ENCODE measurements at regions of chr1 and their contacts with region 1.

Region 1: GRCh38 chr1:117121776-117122697 is 488 bp upstream of the TRIM45 start:
- DNase-seq: peak; percentile 97
- H3K4me3 ChIP-seq: peak overlapping the region; percentile 45 to 85 (median 68)
- H3K27ac ChIP-seq: peak overlapping the region; percentile 77 to 91 (median 86)
- H3K4me1 ChIP-seq: peaks cover 6 to 16% (median 13%) of the 10 kb centered on the region in 4 donors
- H3K27me3 ChIP-seq: peaks cover 6% of the 10 kb centered on the region
- CTCF ChIP-seq: peak; percentile 61 to 73 (median 70)
- EP300 ChIP-seq: no peak
- POLR2A ChIP-seq: no peak

Region 2: GRCh38 chr1:116990612-116991151 is 131.4 kb before region 1 on chr1:
- in situ Hi-C with region 1: no loop called
- intact Hi-C with region 1: no loop called
- DNase-seq: peak; percentile 24
- H3K4me3 ChIP-seq: no peak overlapping the region
- H3K27ac ChIP-seq: peak overlapping the region; percentile 5 to 44 (median 12)
- H3K4me1 ChIP-seq: peaks cover 0 to 40% (median 22%) of the 10 kb centered on the region in 4 donors
- H3K27me3 ChIP-seq: no peaks in the 10 kb centered on the region
- CTCF ChIP-seq: no peak
- EP300 ChIP-seq: no peak
- POLR2A ChIP-seq: no peak

Region 3: GRCh38 chr1:117180147-117180967 is 58.3 kb after region 1 on chr1:
- in situ Hi-C with region 1: no loop called
- intact Hi-C with region 1: no loop called
- DNase-seq: no peak
- H3K4me3 ChIP-seq: no peak overlapping the region
- H3K27ac ChIP-seq: no peak overlapping the region
- H3K4me1 ChIP-seq: no peaks in the 10 kb centered on the region
- H3K27me3 ChIP-seq: no peaks in the 10 kb centered on the region
- CTCF ChIP-seq: no peak
- EP300 ChIP-seq: no peak
- POLR2A ChIP-seq: no peak

Region 4: DNA sequence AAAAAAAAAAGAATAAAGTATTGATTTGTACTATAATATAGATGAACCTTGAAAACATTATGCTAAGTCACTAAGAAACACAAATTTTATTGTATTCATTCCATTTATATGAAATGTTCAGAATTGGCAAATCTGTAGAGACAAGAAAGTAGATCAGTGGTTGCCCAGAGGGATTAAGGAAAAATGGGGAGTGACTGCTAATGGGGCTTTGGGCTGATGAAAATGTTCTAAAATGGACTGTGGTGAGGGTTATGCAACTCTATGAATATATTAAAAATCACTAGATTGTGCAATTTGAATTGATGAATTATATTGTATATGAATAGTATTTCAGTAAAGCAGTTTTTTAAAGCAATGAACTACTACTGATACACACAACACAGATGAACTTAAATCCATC is 797.3 kb after region 1 on chr1:
- in situ Hi-C with region 1: loop called in 1 of 4 experiments (anchors 25 kb)
- intact Hi-C with region 1: no loop called
- DNase-seq: no peak
- H3K4me3 ChIP-seq: no peak overlapping the region
- H3K27ac ChIP-seq: no peak overlapping the region
- H3K4me1 ChIP-seq: no peaks in the 10 kb centered on the region
- H3K27me3 ChIP-seq: no peaks in the 10 kb centered on the region
- CTCF ChIP-seq: no peak
- EP300 ChIP-seq: no peak
- POLR2A ChIP-seq: no peak